ENCODE measurements at regions of chr6 and their contacts with region 1.

Region 1: DNA sequence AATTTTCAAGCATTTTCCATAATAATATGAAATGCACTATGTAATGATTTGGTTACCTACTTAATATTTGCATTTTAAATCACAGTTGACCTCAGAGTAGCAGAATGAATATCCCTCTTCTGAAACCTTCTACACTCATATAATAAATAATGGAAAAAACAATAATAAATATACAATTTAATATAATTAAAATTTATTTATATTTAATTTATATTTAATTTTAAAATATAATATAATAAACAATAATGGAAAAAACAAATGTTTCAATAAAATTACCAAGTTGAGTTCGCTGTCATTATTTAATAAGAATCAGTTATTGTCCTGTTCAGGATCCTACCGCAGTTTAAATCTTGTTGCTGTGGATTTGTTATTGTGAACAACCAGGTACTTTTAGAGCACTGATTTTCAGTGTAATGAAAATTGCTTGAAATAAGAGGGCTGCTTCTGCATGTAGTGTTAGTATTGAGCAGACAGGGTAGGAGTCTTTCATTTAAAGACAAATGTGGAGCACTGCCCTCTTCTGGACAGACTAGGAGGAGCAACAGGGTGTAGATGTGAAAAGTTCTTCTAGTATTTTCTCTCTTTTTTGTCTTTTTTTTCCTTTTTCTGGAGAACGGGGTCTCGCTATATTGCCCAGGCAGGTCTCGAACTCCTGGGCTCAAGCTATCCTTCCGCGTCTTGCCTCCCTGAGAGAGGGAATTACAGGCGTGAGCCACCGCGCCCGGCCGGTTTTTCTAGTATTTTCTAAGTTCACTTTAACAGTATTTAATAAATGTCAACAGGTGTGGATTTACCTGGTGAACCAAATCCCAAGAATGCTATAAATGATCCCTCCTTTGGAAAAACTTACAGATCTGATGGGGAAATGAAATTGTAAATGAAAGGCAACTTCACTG is 13.6 kb downstream of the TRAPPC3L start:
- DNase-seq: no peak
- H3K4me3 ChIP-seq: no peak overlapping the region
- H3K27ac ChIP-seq: no peak overlapping the region
- H3K4me1 ChIP-seq: peaks cover 0 to 31% (median 13%) of the 10 kb centered on the region in 6 donors
- H3K27me3 ChIP-seq: no peaks in the 10 kb centered on the region
- CTCF ChIP-seq: peak; percentile 71 to 92 (median 85)
- POLR2A ChIP-seq: no peak

Region 2: DNA sequence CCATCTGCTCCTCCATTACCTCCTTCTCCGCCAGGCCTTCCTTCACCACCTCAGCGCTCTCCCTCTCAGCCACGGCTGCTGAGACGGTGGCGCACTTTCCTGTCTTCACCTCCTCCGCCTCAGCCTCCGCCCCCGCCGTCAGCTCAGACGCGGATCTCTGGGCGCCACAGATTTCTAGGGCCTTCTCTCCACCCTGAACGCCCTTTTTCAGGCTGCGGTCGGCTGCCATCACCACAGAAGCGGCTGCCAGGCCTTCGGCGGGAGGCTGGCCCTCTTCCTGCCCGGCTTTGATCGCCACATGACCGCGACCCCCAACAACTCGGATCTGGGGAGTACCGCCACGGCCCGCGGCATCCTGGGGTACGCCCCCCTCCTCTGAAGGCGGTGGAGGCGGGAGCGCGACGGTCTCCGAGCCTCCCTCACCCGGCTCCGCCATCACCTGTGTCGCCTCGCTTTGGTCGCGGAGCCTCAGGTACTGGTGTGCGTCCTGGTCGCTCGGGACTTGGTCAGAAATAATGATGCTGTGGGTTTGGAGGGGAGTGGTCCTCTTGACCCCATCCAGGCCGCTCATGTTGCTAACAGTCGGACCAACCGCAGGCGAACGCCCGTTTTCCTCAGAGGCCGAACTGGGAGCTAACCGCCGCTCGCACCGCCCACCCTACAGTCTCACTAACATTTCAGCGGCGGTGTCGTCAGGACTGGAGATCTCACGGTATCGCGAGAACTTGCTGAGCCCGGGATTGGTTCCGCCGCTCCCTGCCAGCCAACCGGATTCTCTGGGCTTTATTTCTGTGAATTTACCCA is 252.5 kb before region 1 on chr6 and contains the start of gene TSPYL1:
- intact Hi-C with region 1: loop called (anchors 5 kb)
- DNase-seq: peak; percentile 97
- H3K4me3 ChIP-seq: peak within 1 kb of the TSS; percentile 50 to 91 (median 81)
- H3K27ac ChIP-seq: peak within 1 kb of the TSS; percentile 88 to 100 (median 99)
- H3K4me1 ChIP-seq: peaks cover 37 to 86% (median 61%) of the 10 kb centered on the region in 6 donors
- H3K27me3 ChIP-seq: no peaks in the 10 kb centered on the region
- CTCF ChIP-seq: peak in 3 of 11 experiments; percentile 7 to 23 (median 22)
- POLR2A ChIP-seq: peak; percentile 91 to 99 (median 92)
- total RNA-seq, gene TSPYL1: 63.1 to 97.7 (median 73.4) TPM

Region 3: GRCh38 chr6:116444092-116444491 is 87.8 kb before region 1 on chr6:
- intact Hi-C with region 1: loop called (anchors 5 kb)
- DNase-seq: no peak
- H3K4me3 ChIP-seq: no peak overlapping the region
- H3K27ac ChIP-seq: no peak overlapping the region
- H3K4me1 ChIP-seq: peaks cover 6 to 69% (median 43%) of the 10 kb centered on the region in 6 donors
- H3K27me3 ChIP-seq: no peaks in the 10 kb centered on the region
- CTCF ChIP-seq: peak in 9 of 11 experiments; percentile 25 to 65 (median 52)
- POLR2A ChIP-seq: no peak

Region 4: DNA sequence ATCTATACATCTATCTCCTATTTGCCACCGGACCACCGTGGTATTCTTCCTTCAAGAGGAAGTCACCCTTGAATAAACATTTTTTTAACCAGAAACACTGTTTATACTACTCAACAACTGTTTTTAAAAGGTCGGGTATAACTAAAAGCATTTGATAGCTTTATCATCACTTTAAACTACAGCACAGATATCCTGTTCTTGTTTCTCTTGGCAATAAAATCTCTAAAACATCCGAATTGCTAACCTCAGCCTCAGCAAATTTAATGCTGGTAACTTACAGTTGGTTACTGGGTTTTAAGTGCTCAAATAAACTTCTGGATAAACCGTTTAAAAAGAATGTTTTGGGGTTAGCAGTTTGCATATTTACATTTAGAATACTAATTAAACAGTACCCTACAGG is 116.2 kb after region 1 on chr6:
- intact Hi-C with region 1: loop called (anchors 5 kb)
- DNase-seq: no peak
- H3K4me3 ChIP-seq: no peak overlapping the region
- H3K27ac ChIP-seq: no peak overlapping the region
- H3K4me1 ChIP-seq: peaks cover 0 to 4% (median 0%) of the 10 kb centered on the region in 6 donors
- H3K27me3 ChIP-seq: no peaks in the 10 kb centered on the region
- CTCF ChIP-seq: no peak
- POLR2A ChIP-seq: no peak

Measured in spleen (tissue), 13 donors.